HEK293 (cell line): ENCODE measurements at regions of chr22 and their contacts with region 1.

Region 1: GRCh38 chr22:20885557-20886323 is 26.9 kb downstream of the SNAP29 start:
- H3K4me3 ChIP-seq: no peak overlapping the region
- H3K27ac ChIP-seq: no peak overlapping the region; the same call in 1 of the 2 replicates
- H3K4me1 ChIP-seq: no peaks in the 10 kb centered on the region
- CTCF ChIP-seq: peak; percentile 99

Region 2: DNA sequence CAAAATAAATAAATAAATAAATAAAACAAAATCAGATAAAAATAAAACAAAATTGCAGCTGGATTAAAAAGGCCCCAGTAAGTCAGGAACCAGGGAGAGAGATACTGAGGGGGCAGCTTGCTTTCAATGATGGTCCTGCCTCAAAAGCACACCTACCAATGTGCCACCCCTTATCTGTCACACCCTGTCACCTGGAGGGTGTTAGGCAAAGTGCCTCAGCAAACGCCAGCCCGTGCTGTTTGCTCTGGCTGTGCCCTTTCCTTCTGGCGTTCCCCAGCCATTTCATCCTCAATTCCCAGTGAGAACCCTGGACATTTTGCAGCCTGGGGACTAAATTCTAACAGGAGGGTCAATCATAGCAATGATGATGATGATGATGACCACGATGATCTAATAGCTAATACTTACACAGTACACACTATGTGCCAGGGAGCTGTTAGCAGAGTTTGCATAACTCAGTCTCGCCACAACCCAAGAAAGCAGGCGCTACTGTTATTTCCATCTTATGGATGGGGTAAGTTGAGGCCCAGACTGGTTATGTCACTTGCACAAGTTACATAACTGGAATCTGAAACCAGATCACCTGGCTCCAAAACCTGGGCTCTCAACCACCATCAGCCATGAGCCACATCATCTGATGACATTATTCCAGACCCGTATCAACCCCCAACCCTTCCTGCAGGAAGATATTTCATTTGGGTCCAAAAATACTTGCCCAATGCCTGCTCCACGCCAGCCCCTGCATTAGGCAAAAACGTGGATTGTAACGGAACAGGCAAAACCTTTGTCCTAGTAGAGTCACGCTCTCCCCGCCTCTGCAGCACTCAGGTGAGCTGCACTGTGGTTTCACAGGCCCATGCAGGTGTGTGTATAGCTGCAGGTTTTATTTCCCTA is 244.5 kb before region 1 on chr22:
- CTCF ChIA-PET with region 1: no interaction called
- POLR2A ChIA-PET with region 1: no interaction called
- H3K4me3 ChIP-seq: no peak overlapping the region
- H3K27ac ChIP-seq: no peak overlapping the region
- H3K4me1 ChIP-seq: no peaks in the 10 kb centered on the region
- CTCF ChIP-seq: no peak

Region 3: GRCh38 chr22:20803696-20804324 is 81.9 kb before region 1 on chr22:
- CTCF ChIA-PET with region 1: interaction called, 23 read pairs
- POLR2A ChIA-PET with region 1: no interaction called
- H3K4me3 ChIP-seq: no peak overlapping the region
- H3K27ac ChIP-seq: no peak overlapping the region
- H3K4me1 ChIP-seq: no peaks in the 10 kb centered on the region
- CTCF ChIP-seq: peak; percentile 56; the same call in 1 of the 2 replicates

Region 4: GRCh38 chr22:20873214-20873613 is 12.5 kb before region 1 on chr22:
- CTCF ChIA-PET with region 1: interaction called, 31 read pairs
- POLR2A ChIA-PET with region 1: interaction called, 6 read pairs
- H3K4me3 ChIP-seq: no peak overlapping the region
- H3K27ac ChIP-seq: no peak overlapping the region
- H3K4me1 ChIP-seq: no peaks in the 10 kb centered on the region
- CTCF ChIP-seq: no peak

Region 5: DNA sequence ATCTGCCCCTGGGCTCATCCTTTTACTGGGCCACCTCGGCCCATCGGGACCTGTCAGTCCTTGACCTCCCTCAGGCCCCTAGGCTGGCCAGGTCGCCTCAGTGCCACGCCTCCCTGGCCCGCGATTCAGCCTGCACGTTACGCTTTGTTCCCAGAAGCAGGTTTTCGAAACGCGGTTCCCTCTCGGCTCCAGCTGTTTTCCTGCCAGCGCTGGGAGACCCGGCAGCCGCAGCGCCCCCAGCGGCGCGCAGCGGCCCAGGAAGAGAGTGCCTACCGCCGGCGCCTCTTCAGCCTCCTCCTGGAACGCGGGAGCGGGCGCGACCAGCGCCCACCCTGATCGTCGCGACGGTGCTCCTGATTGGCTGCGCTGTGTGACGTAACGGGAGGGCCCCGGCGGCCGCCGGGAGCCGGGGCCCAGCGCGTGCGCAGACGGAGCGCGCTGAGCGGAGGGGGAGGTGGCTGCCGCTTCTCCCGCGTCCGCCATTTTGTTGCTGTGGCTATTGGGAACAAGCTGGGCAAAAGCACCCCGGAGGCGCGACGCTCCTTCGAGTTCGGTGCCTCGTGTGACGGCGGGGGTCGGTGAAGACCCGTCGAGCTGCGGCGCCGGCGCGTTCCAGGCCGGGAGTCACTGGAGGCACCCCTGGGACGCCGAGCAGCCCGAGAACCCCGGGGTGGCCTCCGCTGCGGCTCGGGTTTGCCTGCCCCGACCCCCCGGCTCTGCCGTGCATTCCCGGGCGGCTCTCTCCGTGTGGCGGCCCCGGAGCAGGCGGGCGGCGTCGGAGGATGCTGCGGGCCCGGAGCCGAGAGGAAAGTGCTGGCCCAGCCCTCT is 31.5 kb after region 1 on chr22 and contains the start of gene CRKL:
- CTCF ChIA-PET with region 1: interaction called, 29 read pairs
- POLR2A ChIA-PET with region 1: interaction called, 6 read pairs
- H3K4me3 ChIP-seq: peak within 1 kb of the TSS; percentile 76
- H3K27ac ChIP-seq: peak within 1 kb of the TSS; percentile 82
- H3K4me1 ChIP-seq: peaks cover 4% of the 10 kb centered on the region; the same call in 1 of the 2 replicates
- CTCF ChIP-seq: peak; percentile 98

Region 6: DNA sequence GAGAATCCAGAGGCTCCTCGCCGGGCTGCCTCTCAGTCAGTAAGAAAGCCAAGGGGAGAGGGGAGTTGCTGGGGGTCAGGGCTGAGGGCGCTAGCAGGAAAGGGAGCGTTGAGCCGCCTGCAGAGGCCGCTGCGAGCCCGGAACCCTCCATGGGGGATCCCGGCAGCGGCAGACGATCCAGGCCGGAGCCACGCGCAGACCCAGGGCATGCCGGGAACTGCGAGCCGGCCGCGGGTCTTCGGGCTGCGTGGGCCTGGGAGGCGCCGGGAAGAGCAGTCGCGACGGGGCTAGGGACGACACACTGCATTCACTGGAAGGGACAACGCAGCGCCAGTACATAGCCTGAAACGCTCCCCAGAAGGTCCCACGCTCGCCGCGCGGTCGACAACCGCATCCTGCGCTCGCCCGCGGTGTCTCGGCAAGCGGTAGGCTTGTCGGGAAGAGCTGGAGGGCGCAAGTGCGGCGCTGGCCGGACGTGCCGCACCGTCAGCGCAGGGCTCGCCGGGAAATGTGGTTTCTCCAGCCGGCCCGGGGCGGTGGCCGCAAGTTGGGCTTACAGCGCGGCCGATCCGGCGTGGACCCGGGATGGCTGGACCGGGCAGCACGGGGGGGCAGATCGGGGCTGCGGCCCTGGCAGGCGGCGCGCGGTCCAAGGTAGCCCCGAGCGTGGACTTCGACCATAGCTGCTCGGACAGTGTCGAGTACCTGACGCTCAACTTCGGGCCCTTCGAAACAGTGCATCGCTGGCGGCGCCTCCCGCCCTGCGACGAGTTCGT is 96.2 kb after region 1 on chr22 and contains the start of gene LZTR1:
- CTCF ChIA-PET with region 1: interaction called, 6 read pairs
- POLR2A ChIA-PET with region 1: interaction called, 22 read pairs
- H3K4me3 ChIP-seq: peak within 1 kb of the TSS; percentile 78
- H3K27ac ChIP-seq: peak within 1 kb of the TSS; percentile 62
- H3K4me1 ChIP-seq: no peaks in the 10 kb centered on the region
- CTCF ChIP-seq: peak; percentile 92